ENCODE measurements at regions of chr6 and their contacts with region 1.

Region 1: DNA sequence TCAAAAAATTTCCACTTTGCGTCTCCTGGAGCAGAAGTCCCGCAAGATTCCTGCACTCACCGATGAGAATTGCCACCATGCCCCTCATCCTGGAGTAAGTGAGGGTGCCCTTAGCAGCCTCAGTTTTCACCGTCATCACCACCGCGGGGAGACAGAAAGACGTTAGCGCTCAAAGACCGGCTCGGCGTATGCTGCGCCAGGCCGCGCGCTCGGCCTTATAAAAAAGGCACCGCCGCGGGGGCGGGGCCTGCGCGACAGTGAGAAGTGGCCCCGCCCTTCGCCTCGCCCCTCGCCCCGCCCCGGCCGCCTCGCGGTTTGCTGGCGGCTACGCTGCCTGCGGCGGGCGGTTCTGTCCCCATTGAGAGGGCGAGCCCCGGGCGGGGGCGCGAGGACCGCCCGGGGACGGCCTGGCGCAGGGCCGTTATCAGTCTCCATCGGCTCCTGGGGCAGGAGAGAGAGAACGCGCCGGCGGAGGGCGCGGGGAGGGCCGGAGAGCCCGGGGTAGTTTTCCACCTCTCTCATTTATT is 122.3 kb upstream of the SLC2A12 start:
- DNase-seq: peak; percentile 90
- H3K4me3 ChIP-seq: peak overlapping the region; percentile 85 to 100 (median 98)
- H3K27ac ChIP-seq: peak overlapping the region; percentile 98
- H3K4me1 ChIP-seq: peaks cover 59% of the 10 kb centered on the region
- H3K27me3 ChIP-seq: no peaks in the 10 kb centered on the region
- CTCF ChIP-seq: no peak
- POLR2A ChIP-seq: peak; percentile 100

Region 2: DNA sequence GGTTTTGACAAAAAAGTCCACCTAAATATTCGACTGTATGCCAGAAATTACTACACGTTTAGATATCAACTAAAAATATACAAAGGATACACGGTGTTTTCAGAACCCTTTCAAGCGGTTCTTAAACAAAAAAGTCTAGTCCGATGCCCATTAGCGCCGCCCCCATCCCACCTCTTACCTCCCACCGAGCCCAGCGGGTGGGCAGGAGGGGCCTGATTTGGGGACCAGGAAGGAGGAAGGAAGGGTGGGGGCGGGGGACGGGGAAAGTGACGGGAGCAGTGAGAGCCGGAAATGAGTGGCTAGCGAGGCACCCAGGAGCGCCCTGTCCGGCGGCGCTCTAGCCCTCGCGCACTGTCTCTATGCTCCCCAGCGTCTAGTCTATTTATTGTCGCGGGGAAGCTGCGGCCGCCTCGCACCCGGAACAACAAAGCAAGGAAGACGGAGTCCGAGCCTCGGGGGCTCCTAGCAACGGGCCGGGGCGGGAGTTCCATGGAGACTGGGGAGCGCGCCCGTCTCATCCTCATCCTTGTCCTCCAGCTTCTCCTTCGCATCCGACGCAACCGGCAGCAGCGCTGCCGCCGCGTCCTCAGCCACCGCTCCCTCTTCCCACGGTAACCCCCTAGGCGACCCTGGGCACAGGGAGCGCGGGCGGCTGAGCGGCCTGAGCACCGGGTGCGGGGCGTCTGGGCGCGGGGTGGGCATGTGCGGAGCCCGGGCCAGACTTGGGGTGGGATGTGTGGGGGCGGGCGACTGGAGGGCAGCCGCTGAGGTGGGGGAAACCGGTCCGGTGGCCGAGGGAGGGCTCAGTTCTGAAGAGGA is 221.7 kb before region 1 on chr6 and contains the start of gene TBPL1:
- CTCF ChIA-PET with region 1: no interaction called
- POLR2A ChIA-PET with region 1: no interaction called
- dilution Hi-C with region 1: no loop called
- intact Hi-C with region 1: loop called (anchors 2 kb)
- DNase-seq: peak; percentile 96
- H3K4me3 ChIP-seq: peak within 1 kb of the TSS; percentile 79 to 96 (median 86)
- H3K27ac ChIP-seq: peak within 1 kb of the TSS; percentile 88
- H3K4me1 ChIP-seq: peaks cover 21% of the 10 kb centered on the region
- H3K27me3 ChIP-seq: peaks cover 0 to 7% of the 10 kb centered on the region in 2 experiments
- CTCF ChIP-seq: no peak
- POLR2A ChIP-seq: peak; percentile 74
- total RNA-seq, gene TBPL1: 31.2 and 33.4 TPM in 2 replicates

Region 3: GRCh38 chr6:134295953-134296553 is 121.3 kb after region 1 on chr6:
- CTCF ChIA-PET with region 1: interaction called, 11 read pairs
- POLR2A ChIA-PET with region 1: interaction called, 5 read pairs
- dilution Hi-C with region 1: no loop called
- intact Hi-C with region 1: loop called (anchors 1 kb)
- DNase-seq: peak; percentile 94
- H3K4me3 ChIP-seq: no peak overlapping the region
- H3K27ac ChIP-seq: peak overlapping the region; percentile 99
- H3K4me1 ChIP-seq: peaks cover 23% of the 10 kb centered on the region
- H3K27me3 ChIP-seq: no peaks in the 10 kb centered on the region
- CTCF ChIP-seq: no peak
- POLR2A ChIP-seq: peak; percentile 81

Region 4: DNA sequence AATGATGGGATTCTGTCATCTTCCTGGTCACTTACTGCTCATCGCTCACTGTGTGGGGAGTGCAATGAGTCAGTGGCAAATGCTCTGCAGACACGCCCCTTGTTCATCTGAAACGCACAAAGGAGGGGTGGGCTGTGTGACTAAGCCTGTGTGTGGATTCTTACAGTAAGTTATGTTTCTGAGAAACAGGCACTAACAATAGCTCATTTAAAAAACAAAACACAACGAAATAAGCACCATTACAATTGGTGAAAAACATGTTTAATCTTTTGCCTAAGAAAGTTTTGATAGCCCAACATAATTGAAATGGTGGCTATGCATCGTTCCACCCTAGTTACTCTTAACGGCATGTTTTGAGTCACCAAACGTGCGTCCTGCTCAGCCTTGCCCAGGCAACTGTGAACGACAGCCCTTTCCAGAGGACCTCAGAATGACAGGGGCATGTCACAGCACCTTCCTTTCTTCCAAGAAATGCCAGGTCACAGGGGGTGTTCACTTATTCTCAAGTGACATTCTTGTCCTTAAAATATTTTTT is 261.6 kb after region 1 on chr6:
- CTCF ChIA-PET with region 1: interaction called, 12 read pairs
- POLR2A ChIA-PET with region 1: no interaction called
- dilution Hi-C with region 1: no loop called
- intact Hi-C with region 1: loop called (anchors 1 kb)
- DNase-seq: peak; percentile 94
- H3K4me3 ChIP-seq: peak overlapping the region in 1 of 3 experiments; percentile 3
- H3K27ac ChIP-seq: peak overlapping the region; percentile 88
- H3K4me1 ChIP-seq: peaks cover 20% of the 10 kb centered on the region
- H3K27me3 ChIP-seq: no peaks in the 10 kb centered on the region
- CTCF ChIP-seq: no peak
- POLR2A ChIP-seq: no peak

Region 5: DNA sequence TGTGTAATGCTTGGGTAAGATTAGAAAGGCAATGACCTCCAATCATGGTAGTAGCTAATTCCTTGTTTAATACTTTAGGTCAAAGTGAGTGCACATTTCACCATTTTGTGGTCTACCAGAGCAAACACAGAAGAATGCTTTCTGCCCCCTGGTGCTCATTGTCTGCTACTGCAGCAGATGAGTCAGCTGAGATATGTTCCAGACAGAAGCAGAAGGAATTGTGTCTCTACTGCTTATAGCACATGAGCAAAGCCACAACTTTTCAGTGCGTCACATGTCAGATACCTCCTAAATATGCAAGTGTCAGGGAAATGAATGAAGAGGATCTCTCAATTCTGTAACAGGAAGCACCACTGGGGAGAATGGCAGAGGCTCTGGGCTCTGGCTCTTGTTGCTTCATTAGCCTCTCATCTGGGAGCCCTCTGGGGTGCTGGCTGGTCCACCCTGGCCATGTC is 466.3 kb after region 1 on chr6:
- CTCF ChIA-PET with region 1: interaction called, 46 read pairs
- POLR2A ChIA-PET with region 1: interaction called, 9 read pairs
- dilution Hi-C with region 1: no loop called
- intact Hi-C with region 1: loop called (anchors 1 kb)
- DNase-seq: peak; percentile 84
- H3K4me3 ChIP-seq: no peak overlapping the region
- H3K27ac ChIP-seq: peak overlapping the region; percentile 6
- H3K4me1 ChIP-seq: no peaks in the 10 kb centered on the region
- H3K27me3 ChIP-seq: no peaks in the 10 kb centered on the region
- CTCF ChIP-seq: peak; percentile 86 to 94
- POLR2A ChIP-seq: no peak

Region 6: GRCh38 chr6:134882426-134883038 is 707.8 kb after region 1 on chr6:
- CTCF ChIA-PET with region 1: interaction called, 10 read pairs
- POLR2A ChIA-PET with region 1: interaction called, 4 read pairs
- dilution Hi-C with region 1: no loop called
- intact Hi-C with region 1: loop called (anchors 1 kb)
- DNase-seq: peak; percentile 79
- H3K4me3 ChIP-seq: no peak overlapping the region
- H3K27ac ChIP-seq: peak overlapping the region; percentile 3
- H3K4me1 ChIP-seq: peaks cover 13% of the 10 kb centered on the region
- H3K27me3 ChIP-seq: no peaks in the 10 kb centered on the region
- CTCF ChIP-seq: peak; percentile 82
- POLR2A ChIP-seq: no peak

Measured in endothelial cell of umbilical vein (primary cell).